Activated CD4-positive, alpha-beta T cell treated with anti-CD3 and anti-CD28 coated beads for 36 hours (primary cell): ENCODE measurements at regions of chr6 and their contacts with region 1.

Region 1: GRCh38 chr6:146857180-146857979 is 258.6 kb downstream of the ADGB start:
- DNase-seq: peak; percentile 89
- ATAC-seq: peak; percentile 56
- H3K4me3 Mint-ChIP-seq: peak overlapping the region; percentile 32
- H3K27ac Mint-ChIP-seq: peak overlapping the region; percentile 66
- H3K4me1 Mint-ChIP-seq: peaks cover 38% of the 10 kb centered on the region
- H3K27me3 Mint-ChIP-seq: peaks cover 2% of the 10 kb centered on the region

Region 2: GRCh38 chr6:146670161-146670560 is 187.2 kb before region 1 on chr6:
- CTCF ChIA-PET with region 1: no interaction called
- POLR2A ChIA-PET with region 1: no interaction called
- intact Hi-C with region 1: no loop called
- DNase-seq: no peak
- ATAC-seq: no peak
- H3K4me3 Mint-ChIP-seq: no peak overlapping the region
- H3K27ac Mint-ChIP-seq: no peak overlapping the region
- H3K4me1 Mint-ChIP-seq: no peaks in the 10 kb centered on the region
- H3K27me3 Mint-ChIP-seq: peaks cover 14% of the 10 kb centered on the region

Region 3: DNA sequence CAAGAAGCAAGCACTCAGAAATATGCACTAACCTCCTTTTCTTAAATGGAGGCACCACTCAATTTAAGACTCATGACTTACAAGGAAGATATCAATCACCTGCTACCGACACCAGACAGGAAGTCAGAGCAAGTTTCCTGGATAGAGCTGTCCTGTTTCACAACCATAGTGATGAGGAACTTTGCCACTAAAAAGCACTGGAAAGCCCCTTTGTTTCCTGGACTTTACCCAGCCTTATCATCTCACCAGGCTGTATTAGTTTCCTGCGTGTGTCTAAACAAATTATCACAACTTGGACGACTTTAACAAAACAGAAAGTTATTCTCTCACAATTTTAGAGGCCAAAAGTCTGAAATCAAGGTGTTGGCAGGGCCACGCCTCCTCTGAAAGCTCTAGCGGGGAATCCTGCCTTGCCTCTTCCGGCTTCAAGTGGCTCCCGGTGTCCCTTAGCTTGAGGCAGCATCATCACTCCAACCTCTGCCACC is 93.0 kb after region 1 on chr6:
- CTCF ChIA-PET with region 1: no interaction called
- POLR2A ChIA-PET with region 1: no interaction called
- intact Hi-C with region 1: loop called in 1 of 2 experiments (anchors 2 kb)
- DNase-seq: peak; percentile 18
- ATAC-seq: peak; percentile 95
- H3K4me3 Mint-ChIP-seq: no peak overlapping the region
- H3K27ac Mint-ChIP-seq: peak overlapping the region; percentile 55
- H3K4me1 Mint-ChIP-seq: peaks cover 15% of the 10 kb centered on the region
- H3K27me3 Mint-ChIP-seq: no peaks in the 10 kb centered on the region

Region 4: GRCh38 chr6:147268254-147268653 is 410.9 kb after region 1 on chr6:
- CTCF ChIA-PET with region 1: no interaction called
- POLR2A ChIA-PET with region 1: no interaction called
- intact Hi-C with region 1: loop called (anchors 1 to 5 kb)
- DNase-seq: no peak
- ATAC-seq: peak; percentile 92
- H3K4me3 Mint-ChIP-seq: no peak overlapping the region
- H3K27ac Mint-ChIP-seq: peak overlapping the region; percentile 79
- H3K4me1 Mint-ChIP-seq: peaks cover 17% of the 10 kb centered on the region
- H3K27me3 Mint-ChIP-seq: no peaks in the 10 kb centered on the region

Region 5: DNA sequence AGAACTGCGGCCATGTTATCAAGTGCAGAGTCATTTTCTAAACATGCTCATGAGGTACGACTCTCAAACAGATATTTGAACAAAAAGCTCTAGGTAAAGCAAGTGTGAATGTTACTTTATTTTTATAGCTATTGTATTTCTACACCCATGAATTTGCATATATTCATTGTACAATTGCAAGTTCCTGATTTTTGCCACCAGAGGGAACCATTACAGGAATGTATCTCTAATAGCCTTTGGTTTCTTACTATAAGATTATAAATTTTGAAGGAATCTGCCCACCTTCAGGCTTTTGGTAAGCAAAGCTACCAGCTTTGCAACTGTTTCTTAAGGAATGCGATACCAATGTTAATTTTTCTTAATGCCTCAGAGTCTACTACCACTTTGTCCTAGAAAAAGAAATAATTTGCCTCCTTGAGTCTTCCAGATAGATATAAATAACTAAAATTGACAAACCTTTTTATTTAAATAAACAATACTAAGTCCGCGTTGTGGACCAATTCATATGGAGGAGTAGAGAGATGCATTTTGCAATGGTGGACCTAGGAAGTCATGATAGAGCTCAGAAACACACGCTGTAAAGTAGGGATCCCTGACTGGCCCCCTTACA is 525.7 kb after region 1 on chr6:
- CTCF ChIA-PET with region 1: no interaction called
- POLR2A ChIA-PET with region 1: no interaction called
- intact Hi-C with region 1: loop called in 1 of 2 experiments (anchors 5 kb)
- DNase-seq: no peak
- ATAC-seq: no peak
- H3K4me3 Mint-ChIP-seq: no peak overlapping the region
- H3K27ac Mint-ChIP-seq: no peak overlapping the region
- H3K4me1 Mint-ChIP-seq: peaks cover 16% of the 10 kb centered on the region
- H3K27me3 Mint-ChIP-seq: no peaks in the 10 kb centered on the region